ENCODE measurements at regions of chr6 and their contacts with region 1.

Region 1: DNA sequence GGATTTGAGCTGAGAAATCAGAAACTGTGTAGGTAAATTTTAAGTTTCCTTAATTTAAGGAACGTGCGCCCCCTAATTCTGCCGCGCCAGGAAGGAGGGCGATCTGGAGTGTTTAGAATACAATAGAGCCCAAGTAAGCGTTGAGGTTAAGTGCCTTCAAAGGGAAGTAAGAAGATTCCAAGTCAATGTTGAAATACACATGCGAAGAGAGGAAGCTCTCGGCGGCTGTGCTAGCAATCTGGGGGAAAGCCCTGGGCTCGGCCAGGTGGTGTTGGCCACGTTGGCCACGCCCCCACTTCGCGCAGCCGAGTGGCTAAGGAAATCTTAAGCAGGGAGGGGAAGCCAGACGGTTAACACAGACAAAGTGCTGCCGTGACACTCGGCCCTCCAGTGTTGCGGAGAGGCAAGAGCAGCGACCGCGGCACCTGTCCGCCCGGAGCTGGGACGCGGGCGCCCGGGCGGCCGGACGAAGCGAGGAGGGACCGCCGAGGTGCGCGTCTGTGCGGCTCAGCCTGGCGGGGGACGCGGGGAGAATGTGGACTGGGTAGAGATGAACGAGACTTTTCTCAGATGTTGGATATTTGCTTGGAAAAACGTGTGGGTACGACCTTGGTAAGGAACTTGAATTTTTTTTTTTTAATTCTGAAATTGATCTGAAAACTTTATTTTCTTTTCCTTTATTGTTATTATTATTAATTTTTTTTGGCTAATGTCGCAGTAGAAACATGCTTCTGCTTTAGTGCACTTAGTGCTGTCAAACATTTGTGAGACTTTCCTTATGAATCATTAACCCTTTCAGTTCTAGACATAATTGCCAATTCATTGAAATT is at the start of gene PRDM1:
- DNase-seq: peak; percentile 88 to 97 (median 97)
- H3K4me3 ChIP-seq: peak within 1 kb of the TSS; percentile 18 to 83 (median 73)
- H3K27ac ChIP-seq: peak within 1 kb of the TSS in 1 of 2 experiments; percentile 63
- H3K4me1 ChIP-seq: peaks cover 31 to 56% (median 39%) of the 10 kb centered on the region in 4 experiments
- H3K27me3 ChIP-seq: peaks cover 0 to 8% (median 0%) of the 10 kb centered on the region in 5 experiments

Region 2: GRCh38 chr6:105992315-105992961 is 93.8 kb before region 1 on chr6:
- CTCF ChIA-PET with region 1: interaction called, 19 read pairs
- POLR2A ChIA-PET with region 1: no interaction called
- DNase-seq: peak; percentile 85 to 91 (median 90)
- H3K4me3 ChIP-seq: peak overlapping the region; percentile 9 to 92 (median 77)
- H3K27ac ChIP-seq: no peak overlapping the region
- H3K4me1 ChIP-seq: peaks cover 17 to 36% (median 32%) of the 10 kb centered on the region in 4 experiments
- H3K27me3 ChIP-seq: peaks cover 36 to 96% (median 47%) of the 10 kb centered on the region in 5 experiments